ENCODE measurements at regions of chr6 and their contacts with region 1.

Region 1: DNA sequence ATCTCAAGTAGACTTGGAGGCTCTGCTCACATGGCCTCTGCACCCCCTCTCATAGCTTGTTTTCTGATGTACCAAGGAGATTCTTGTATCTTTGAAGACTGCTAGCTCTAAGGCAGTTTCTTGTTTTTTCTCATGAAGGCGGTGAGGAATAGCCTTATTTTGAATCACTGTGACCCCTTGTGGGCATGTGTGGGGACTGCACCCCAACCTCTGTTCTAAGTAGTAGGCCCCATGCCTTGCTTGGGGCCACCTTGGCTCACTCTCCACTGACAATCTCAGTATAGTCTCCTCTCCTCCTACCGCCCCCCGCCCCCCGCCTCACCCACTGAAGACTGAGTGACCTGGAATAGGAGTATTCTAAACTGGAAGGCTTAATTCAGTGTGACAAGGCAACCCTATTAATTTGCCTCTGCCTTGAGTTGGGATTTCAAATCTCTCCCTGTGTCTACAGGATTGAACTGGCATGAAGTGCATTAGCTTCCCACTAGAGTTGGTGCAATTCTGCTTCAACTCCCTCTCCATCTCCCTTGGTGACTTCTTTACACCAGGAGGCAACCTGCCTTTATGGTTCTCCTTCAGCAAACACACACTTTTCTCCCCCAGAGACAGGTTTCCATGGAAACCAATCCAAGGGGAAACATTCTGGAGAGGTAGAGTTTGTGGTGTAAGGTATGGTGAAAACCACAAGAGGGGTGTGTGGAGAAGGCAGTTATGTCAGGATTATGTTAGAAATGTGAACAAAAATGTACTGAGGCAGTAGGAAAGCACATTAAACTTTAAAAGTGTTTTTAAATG is 75.5 kb upstream of the ECI2 start:
- DNase-seq: peak; percentile 74
- H3K4me3 ChIP-seq: no peak overlapping the region
- H3K27ac ChIP-seq: no peak overlapping the region
- H3K4me1 ChIP-seq: no peaks in the 10 kb centered on the region
- H3K27me3 ChIP-seq: peaks cover under 1 to 3% of the 10 kb centered on the region in 2 experiments
- CTCF ChIP-seq: peak; percentile 72 to 80
- POLR2A ChIP-seq: no peak

Region 2: DNA sequence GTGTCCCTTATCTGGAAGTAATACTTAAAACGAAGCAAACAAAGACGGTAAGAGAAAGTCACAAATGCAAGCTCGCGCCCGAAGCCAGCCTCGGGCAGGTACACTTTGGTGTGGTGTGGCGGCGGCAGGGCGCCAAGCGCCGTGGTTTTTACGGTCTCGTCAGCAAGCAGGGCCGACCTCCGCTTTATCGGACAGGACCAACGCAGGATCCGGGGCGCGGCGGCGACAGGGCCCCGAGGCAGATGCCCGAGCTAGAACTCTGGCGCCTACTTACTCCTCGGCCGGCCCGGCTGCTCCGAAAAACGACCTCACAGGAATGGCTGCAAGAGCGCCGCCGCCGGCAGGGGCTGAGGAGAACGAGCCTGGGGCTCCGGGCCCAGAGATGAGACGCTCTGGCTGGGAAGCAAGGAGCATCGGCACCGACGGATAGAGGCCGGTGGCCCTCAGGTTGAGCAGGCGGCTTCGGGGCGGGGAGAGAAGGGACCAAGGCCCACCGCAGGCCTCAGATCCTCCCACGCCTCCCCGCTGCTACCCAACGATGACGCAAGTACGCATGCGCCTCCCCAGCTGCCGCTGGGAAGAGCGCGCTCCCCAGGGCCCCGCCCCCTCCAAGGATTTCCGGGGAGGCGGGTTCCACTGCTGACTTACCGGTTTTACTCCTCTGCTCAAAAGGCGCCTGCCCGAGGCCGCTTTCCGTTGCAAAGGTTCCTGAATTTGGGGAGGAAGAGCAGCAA is 192.5 kb before region 1 on chr6:
- CTCF ChIA-PET with region 1: interaction called, 11 read pairs
- POLR2A ChIA-PET with region 1: no interaction called
- dilution Hi-C with region 1: no loop called
- intact Hi-C with region 1: no loop called
- DNase-seq: peak; percentile 94
- H3K4me3 ChIP-seq: peak overlapping the region; percentile 50 to 92 (median 85)
- H3K27ac ChIP-seq: peak overlapping the region; percentile 93
- H3K4me1 ChIP-seq: peaks cover 29% of the 10 kb centered on the region
- H3K27me3 ChIP-seq: no peaks in the 10 kb centered on the region
- CTCF ChIP-seq: peak; percentile 25 to 52
- POLR2A ChIP-seq: peak; percentile 84

Region 3: GRCh38 chr6:4125936-4126864 is 84.6 kb before region 1 on chr6:
- CTCF ChIA-PET with region 1: interaction called, 14 read pairs
- POLR2A ChIA-PET with region 1: no interaction called
- dilution Hi-C with region 1: no loop called
- intact Hi-C with region 1: loop called (anchors 1 kb)
- DNase-seq: peak; percentile 83
- H3K4me3 ChIP-seq: no peak overlapping the region
- H3K27ac ChIP-seq: peak overlapping the region; percentile 54
- H3K4me1 ChIP-seq: peaks cover 50% of the 10 kb centered on the region
- H3K27me3 ChIP-seq: no peaks in the 10 kb centered on the region
- CTCF ChIP-seq: peak; percentile 23 to 28
- POLR2A ChIP-seq: peak; percentile 38

Region 4: GRCh38 chr6:4164117-4164442 is 46.7 kb before region 1 on chr6:
- CTCF ChIA-PET with region 1: interaction called, 22 read pairs
- POLR2A ChIA-PET with region 1: no interaction called
- dilution Hi-C with region 1: no loop called
- intact Hi-C with region 1: loop called (anchors 1 kb)
- DNase-seq: no peak
- H3K4me3 ChIP-seq: no peak overlapping the region
- H3K27ac ChIP-seq: no peak overlapping the region
- H3K4me1 ChIP-seq: no peaks in the 10 kb centered on the region
- H3K27me3 ChIP-seq: no peaks in the 10 kb centered on the region
- CTCF ChIP-seq: no peak
- POLR2A ChIP-seq: no peak

Region 5: GRCh38 chr6:4225161-4225872 is 14.5 kb after region 1 on chr6:
- CTCF ChIA-PET with region 1: interaction called, 12 read pairs
- POLR2A ChIA-PET with region 1: no interaction called
- dilution Hi-C with region 1: no loop called
- intact Hi-C with region 1: no loop called
- DNase-seq: no peak
- H3K4me3 ChIP-seq: no peak overlapping the region
- H3K27ac ChIP-seq: no peak overlapping the region
- H3K4me1 ChIP-seq: no peaks in the 10 kb centered on the region
- H3K27me3 ChIP-seq: no peaks in the 10 kb centered on the region
- CTCF ChIP-seq: peak in 1 of 2 donors; percentile 17
- POLR2A ChIP-seq: no peak

Region 6: GRCh38 chr6:4472969-4473642 is 262.3 kb after region 1 on chr6:
- CTCF ChIA-PET with region 1: no interaction called
- POLR2A ChIA-PET with region 1: no interaction called
- dilution Hi-C with region 1: no loop called
- intact Hi-C with region 1: no loop called
- DNase-seq: no peak
- H3K4me3 ChIP-seq: no peak overlapping the region
- H3K27ac ChIP-seq: no peak overlapping the region
- H3K4me1 ChIP-seq: no peaks in the 10 kb centered on the region
- H3K27me3 ChIP-seq: peaks cover 0 to 5% of the 10 kb centered on the region in 2 experiments
- CTCF ChIP-seq: no peak
- POLR2A ChIP-seq: no peak